Colonic mucosa (tissue), 4 donors: ENCODE measurements at regions of chr15 and their contacts with region 1.

Region 1: DNA sequence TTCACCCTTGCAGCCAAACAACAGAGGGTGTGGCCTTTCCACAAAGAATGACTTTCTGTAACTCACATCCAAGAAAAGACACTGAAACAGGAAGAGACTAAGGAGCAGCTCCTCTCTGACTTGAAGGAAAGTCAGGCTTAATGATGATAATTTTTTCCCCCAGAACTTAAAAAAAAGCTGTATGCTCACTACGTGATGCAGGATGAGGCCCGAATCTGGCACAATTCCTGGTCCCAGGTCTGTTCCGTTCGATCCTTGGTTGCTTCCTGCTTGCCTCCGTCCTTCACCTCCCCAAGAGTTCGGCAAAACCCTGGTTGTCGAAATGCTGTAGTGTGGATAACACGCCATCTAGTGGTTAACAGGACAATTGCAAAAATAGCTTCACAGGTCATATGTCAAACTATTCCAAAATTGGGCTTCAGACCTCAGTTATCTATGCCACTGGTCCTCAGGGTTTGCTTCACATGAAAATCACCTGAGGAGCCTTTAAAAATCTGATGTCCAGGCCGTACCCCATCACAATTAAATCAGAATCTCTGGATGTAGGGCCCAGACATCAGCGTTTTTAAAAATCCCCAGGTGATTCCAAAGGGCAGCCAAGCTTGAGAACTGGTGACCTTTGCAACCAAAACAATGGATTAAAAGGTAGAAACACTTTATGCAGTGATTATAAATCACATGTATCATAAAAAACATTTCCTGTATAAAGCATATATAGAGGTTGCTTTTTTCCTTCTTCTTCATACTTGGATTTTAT is 28.1 kb upstream of the SYNM start:
- DNase-seq: peak; percentile 55
- H3K4me3 ChIP-seq: no peak overlapping the region
- H3K27ac ChIP-seq: no peak overlapping the region
- H3K4me1 ChIP-seq: no peaks in the 10 kb centered on the region
- H3K27me3 ChIP-seq: no peaks in the 10 kb centered on the region
- CTCF ChIP-seq: peak; percentile 86

Region 2: GRCh38 chr15:98440917-98441316 is 635.8 kb before region 1 on chr15:
- intact Hi-C with region 1: loop called (anchors 2 kb)
- DNase-seq: no peak
- H3K4me3 ChIP-seq: no peak overlapping the region
- H3K27ac ChIP-seq: no peak overlapping the region
- H3K4me1 ChIP-seq: no peaks in the 10 kb centered on the region
- H3K27me3 ChIP-seq: no peaks in the 10 kb centered on the region
- CTCF ChIP-seq: no peak

Region 3: DNA sequence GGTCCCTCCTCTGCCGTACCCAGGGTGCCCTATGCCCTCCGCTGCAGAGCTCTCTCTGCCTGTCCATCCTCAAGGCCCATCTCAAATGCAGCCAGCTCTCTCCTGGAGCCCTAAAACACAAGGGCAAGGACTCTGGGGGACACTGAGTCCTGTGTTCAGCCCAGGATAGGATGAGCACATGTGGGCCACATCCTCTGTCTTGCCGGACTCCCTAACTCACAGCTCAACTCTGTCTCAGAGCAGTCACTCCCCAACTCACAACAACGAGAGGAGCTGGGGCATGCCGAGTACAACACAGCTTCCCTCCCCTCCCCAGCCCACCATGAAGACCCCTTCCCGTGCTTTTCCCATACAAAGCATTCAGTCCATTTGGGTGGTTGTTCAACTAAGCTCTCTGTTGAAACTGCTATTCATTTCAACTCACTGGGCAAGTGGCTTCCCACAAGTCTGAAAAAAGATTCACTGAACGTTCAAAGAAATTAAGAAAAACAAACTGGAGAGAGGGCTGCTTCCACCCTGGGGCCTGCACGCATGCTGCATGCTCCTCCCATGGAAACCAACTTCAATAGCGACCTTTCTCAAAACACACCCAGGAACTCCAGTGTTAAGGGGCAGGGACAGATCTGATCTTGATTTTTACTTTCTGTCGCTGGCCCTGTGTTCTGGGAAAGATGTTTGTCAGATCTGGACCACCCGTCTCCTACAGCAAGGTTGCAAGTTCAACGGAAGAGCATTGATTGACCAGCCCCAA is 552.6 kb before region 1 on chr15:
- intact Hi-C with region 1: loop called (anchors 5 kb)
- DNase-seq: no peak
- H3K4me3 ChIP-seq: no peak overlapping the region
- H3K27ac ChIP-seq: no peak overlapping the region
- H3K4me1 ChIP-seq: no peaks in the 10 kb centered on the region
- H3K27me3 ChIP-seq: no peaks in the 10 kb centered on the region
- CTCF ChIP-seq: no peak